GM10248 (cell line): ENCODE measurements at regions of chr2 and their contacts with region 1.

Region 1: DNA sequence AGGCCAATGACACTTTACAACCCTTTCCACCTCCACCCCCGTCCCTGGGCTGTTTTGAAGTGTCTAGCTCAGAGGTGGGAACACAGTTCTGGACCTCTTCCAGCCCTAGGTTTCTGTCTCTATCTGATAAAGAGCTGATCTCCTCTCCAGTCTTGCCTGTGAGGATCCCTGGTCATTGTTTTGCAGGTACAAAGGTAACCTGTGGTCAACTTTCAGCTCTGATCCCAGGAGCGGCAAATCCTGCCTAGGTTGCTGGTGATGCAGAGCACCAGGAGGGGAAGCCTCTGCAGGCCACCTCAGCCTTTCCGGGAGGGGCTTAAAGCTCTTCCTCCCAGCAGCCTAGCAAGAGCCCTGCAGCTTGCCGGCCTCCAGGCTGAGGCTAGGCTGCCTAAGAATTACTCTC is 69.8 kb upstream of the WIPF1 start:
- DNase-seq: no peak
- CTCF ChIP-seq: no peak

Region 2: DNA sequence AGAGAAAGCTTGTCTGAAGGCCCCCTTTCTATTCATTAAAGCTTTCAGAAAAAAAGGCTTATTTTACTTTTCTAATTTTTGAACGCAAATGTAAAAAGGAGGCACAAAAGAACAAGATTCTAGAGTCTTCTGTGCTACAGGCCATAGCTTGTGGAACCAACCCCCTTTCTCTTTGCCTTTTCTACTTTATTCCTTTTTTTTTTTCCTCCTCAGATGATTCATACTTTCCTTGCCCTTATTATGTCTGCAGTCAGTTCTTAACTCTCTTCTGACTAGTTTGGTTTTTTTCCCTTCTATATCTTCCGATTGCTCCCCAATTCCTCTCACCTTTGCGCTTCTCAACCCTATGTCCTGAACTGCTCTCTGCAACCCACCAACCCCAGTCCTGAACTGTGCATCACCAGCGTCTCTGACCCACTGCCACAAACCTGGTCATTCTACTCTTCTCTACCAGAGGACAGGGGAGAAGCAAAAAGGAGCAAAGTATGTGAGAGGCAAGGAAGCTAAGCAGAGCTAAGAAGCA is 12.9 kb before region 1 on chr2:
- CTCF ChIA-PET with region 1: interaction called, 12 read pairs
- POLR2A ChIA-PET with region 1: no interaction called
- DNase-seq: no peak
- CTCF ChIP-seq: no peak